Posterior cingulate gyrus (tissue), 11 donors: ENCODE measurements at regions of chr5 and their contacts with region 1.

Region 1: DNA sequence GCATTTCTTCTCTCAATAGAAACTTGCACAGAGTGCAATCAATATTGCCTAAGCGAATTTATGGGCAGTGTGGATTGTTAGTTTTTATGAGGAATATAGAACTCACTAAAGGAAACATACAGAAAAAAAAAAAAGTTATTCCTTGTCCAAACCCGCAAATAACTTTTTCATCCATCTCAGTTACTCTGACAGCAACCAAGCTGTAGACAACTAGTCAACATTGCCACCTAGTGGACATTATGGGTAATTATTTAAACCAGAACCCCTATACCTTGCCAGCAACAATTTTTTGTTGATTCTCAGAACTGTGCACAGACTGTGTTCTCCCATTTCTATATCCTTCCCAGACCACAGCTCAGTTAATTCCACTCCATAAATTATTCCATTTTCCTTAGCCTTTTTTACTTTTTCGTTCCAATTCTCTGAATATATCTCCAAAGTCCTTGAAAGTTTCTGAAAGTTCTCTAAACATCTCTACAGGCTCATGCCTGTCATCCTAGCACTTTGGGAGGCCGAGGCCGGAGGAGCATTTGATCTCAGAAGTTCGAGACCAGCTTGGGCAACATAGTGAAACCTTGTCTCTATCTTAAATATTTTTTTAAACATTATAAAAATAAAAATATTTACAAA is 2.6 kb upstream of the AFAP1L1 start:
- DNase-seq: no peak

Region 2: GRCh38 chr5:148972958-148973357 is 296.1 kb before region 1 on chr5:
- intact Hi-C with region 1: no loop called
- DNase-seq: no peak

Region 3: DNA sequence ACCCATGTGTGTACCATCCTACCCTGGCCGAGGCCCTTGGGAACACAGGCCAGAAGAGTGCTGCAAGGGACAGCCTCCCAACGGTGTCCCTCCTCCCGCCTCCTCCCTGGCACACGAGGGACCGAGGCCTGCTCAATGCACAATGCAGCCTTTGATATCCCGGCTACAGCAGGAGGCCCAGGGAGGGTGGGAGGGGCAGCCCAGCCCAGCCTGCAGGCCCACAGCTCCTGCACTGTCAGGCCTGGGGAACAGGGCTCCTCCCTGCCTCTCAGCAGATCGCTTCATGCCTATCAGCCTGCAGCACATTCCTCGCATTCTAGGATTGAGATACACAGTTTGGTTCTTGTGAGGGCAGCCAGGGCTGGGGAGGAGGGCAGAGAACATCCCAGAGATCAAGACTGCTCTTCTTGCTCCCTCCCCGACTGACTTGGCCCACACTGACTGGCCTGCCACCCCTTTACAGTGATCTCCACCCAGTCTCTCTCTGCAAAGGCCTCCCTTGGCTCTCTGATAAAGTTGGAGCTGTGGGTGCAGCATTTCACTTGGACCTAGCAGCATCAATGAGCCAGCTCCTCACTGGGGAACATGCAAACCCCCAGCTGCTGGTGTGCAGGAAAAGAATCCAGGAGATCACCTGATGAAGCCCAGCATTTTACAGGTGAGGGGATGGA is 205.9 kb before region 1 on chr5 and contains the start of gene SH3TC2:
- intact Hi-C with region 1: loop called (anchors 5 kb)
- DNase-seq: peak; percentile 73 to 98 (median 86)

Region 4: GRCh38 chr5:149141224-149141956 is 127.7 kb before region 1 on chr5 and contains the start of gene ABLIM3:
- intact Hi-C with region 1: loop called (anchors 1 kb)
- DNase-seq: peak; percentile 59 to 97 (median 74)

Region 5: GRCh38 chr5:149251546-149251945 is 17.5 kb before region 1 on chr5:
- intact Hi-C with region 1: no loop called
- DNase-seq: peak in 1 of 10 donors; percentile 68

Region 6: GRCh38 chr5:149345147-149345875 is 76.3 kb after region 1 on chr5 and contains the start of gene GRPEL2:
- intact Hi-C with region 1: loop called (anchors 10 kb)
- DNase-seq: peak; percentile 94 to 99 (median 96)